CD8-positive, alpha-beta T cell (primary cell): ENCODE measurements at regions of chr1 and their contacts with region 1.

Region 1: DNA sequence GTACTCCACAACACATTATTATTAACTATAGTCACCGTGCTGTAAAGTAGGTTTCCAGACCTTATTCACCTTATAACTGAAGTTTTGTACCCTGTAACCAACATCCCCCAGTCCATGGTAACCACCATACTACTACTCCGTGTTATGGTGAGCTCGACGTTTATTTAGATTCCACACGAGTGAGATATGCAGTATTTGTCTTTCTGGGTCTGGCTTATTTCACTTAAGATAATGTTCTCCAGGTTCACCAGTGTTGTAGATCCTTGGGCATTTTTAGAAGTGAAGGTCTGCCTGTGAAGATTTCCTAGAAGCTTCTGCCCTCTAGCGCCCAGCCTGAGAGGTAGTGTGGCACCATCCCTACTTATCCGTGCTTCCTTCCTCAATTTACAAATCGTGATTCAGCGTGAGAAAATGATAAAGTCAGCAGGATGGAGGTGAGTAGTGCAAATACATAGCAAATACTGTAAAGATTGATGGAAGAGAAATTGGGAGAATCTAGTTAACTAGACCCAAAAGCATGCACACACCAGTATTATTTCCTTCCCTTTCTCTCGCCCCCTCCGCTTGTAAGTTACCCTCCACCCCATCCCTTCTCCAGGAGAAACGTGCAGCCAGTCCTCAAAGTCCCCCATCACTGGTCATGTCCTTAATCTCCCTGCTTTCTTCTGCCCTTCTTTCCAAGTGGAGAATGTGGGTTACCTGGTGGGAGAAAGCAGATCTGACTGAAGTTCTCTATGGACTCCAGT is 36.0 kb upstream of the DISC1 start:
- DNase-seq: peak in 5 of 9 experiments; percentile 29 to 63 (median 38)
- ATAC-seq: peak; percentile 42
- H3K4me3 ChIP-seq: no peak overlapping the region
- H3K4me3 Mint-ChIP-seq: no peak overlapping the region
- H3K27ac ChIP-seq: no peak overlapping the region
- H3K27ac Mint-ChIP-seq: no peak overlapping the region
- H3K4me1 ChIP-seq: no peaks in the 10 kb centered on the region
- H3K4me1 Mint-ChIP-seq: peaks cover 4% of the 10 kb centered on the region
- H3K27me3 ChIP-seq: no peaks in the 10 kb centered on the region
- H3K27me3 Mint-ChIP-seq: no peaks in the 10 kb centered on the region
- CTCF ChIP-seq: peak; percentile 47

Region 2: GRCh38 chr1:231364192-231364591 is 226.4 kb before region 1 on chr1:
- CTCF ChIA-PET with region 1: interaction called, 18 read pairs
- POLR2A ChIA-PET with region 1: no interaction called
- intact Hi-C with region 1: no loop called
- DNase-seq: no peak
- ATAC-seq: no peak
- H3K4me3 ChIP-seq: no peak overlapping the region
- H3K4me3 Mint-ChIP-seq: no peak overlapping the region
- H3K27ac ChIP-seq: no peak overlapping the region
- H3K27ac Mint-ChIP-seq: peak overlapping the region; percentile 32
- H3K4me1 ChIP-seq: no peaks in the 10 kb centered on the region
- H3K4me1 Mint-ChIP-seq: no peaks in the 10 kb centered on the region
- H3K27me3 ChIP-seq: no peaks in the 10 kb centered on the region
- H3K27me3 Mint-ChIP-seq: no peaks in the 10 kb centered on the region
- CTCF ChIP-seq: no peak